ENCODE measurements at regions of chr5 and their contacts with region 1.

Region 1: DNA sequence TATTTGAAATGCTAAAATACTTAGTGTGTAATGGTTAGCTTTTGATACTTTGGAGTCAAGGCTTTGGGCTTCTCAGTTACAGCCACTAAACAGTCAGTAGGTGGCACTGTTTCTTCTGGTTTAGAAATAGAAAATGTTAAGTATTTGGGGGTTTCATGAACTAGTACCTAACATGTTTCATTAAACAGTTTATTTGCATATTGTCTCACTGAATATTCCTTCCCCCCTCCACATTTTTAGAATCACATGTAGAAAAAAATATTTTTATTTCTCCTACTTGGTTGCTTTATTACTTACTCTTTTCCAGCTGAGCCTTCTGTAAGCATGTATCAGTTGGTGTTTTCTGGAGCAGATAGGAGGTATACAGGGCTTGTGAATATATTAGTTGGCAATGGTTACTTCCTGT is 48.0 kb downstream of the IPO11 start:
- DNase-seq: no peak
- H3K4me3 ChIP-seq: no peak overlapping the region
- CTCF ChIP-seq: no peak
- POLR2A ChIP-seq: no peak

Region 2: GRCh38 chr5:62560786-62561185 is 100.2 kb after region 1 on chr5:
- intact Hi-C with region 1: no loop called
- DNase-seq: no peak
- H3K4me3 ChIP-seq: no peak overlapping the region
- CTCF ChIP-seq: no peak
- POLR2A ChIP-seq: no peak

Region 3: DNA sequence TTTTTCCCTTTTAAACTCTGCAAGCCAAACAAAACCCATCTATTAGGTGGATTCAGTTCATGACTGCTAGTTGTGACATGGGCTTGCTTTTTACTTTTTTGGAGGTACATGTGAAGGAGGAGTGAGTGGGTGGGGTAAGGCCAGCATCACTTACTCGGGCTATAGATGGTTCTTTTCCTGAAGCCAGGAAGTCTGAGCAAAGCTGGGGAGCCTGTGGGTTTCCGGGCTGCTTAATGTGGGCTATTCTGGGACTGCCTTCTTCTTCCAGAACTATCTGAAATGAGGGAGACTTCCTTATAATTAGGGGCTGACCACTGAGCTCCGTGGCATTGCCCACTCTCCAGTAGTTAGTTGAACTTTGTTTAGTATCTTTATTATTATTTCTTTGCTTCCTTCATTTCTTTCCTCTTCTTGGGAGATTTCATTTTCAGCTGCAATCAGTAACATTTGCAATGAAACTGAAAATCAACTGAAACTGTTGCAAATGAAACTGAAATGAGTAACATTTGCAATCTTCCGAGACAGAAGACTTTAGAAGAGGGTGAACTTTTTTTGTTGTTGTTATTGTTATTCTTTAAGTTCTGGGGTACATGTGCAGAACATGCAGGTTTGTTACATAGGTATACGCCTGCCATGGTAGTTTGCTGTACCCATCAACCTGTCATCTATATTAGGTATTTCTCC is 322.9 kb after region 1 on chr5:
- intact Hi-C with region 1: loop called (anchors 10 kb)
- DNase-seq: no peak
- H3K4me3 ChIP-seq: no peak overlapping the region
- CTCF ChIP-seq: no peak
- POLR2A ChIP-seq: no peak

Region 4: DNA sequence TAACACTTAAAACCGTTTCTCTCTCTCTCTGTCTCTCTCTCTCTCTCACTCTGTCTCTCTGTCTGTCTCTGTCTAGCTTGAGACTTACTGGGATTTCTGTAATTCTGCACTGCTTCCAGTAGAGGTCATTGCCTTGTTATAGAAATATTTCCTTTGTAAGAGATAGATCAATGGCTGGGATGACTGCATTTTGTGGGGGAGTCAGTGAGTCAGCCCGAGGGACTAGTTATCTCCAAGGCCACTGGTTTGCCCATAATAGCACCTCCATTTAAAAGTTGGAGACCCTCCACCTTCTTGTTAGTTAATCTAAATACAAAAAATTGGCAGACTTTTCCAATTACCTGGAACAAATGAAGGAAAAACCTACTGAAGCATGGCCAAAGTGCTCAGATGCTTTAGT is 665.3 kb after region 1 on chr5:
- intact Hi-C with region 1: no loop called
- DNase-seq: no peak
- H3K4me3 ChIP-seq: no peak overlapping the region
- CTCF ChIP-seq: no peak
- POLR2A ChIP-seq: no peak

Region 5: GRCh38 chr5:64417390-64417789 is 1956.8 kb after region 1 on chr5:
- intact Hi-C with region 1: loop called (anchors 10 kb)
- DNase-seq: no peak
- H3K4me3 ChIP-seq: no peak overlapping the region
- CTCF ChIP-seq: no peak
- POLR2A ChIP-seq: no peak

Measured in lower leg skin (tissue), 4 donors.